MCF 10A (cell line): ENCODE measurements at regions of chr13 and their contacts with region 1.

Region 1: GRCh38 chr13:20902438-20903163 is at the start of gene XPO4:
- DNase-seq: peak; percentile 77
- H3K4me3 Mint-ChIP-seq: peak within 1 kb of the TSS; percentile 94
- H3K27ac Mint-ChIP-seq: peak within 1 kb of the TSS; percentile 94
- H3K4me1 Mint-ChIP-seq: peaks cover 5% of the 10 kb centered on the region
- H3K27me3 Mint-ChIP-seq: no peaks in the 10 kb centered on the region
- CTCF ChIP-seq: no peak
- total RNA-seq, gene XPO4: 22.5 and 25.8 TPM in 2 replicates

Region 2: GRCh38 chr13:20684546-20684945 is 218.1 kb before region 1 on chr13:
- CTCF ChIA-PET with region 1: no interaction called
- POLR2A ChIA-PET with region 1: no interaction called
- intact Hi-C with region 1: no loop called
- DNase-seq: peak; percentile 60
- H3K4me3 Mint-ChIP-seq: no peak overlapping the region
- H3K27ac Mint-ChIP-seq: no peak overlapping the region
- H3K4me1 Mint-ChIP-seq: no peaks in the 10 kb centered on the region
- H3K27me3 Mint-ChIP-seq: no peaks in the 10 kb centered on the region
- CTCF ChIP-seq: no peak

Region 3: DNA sequence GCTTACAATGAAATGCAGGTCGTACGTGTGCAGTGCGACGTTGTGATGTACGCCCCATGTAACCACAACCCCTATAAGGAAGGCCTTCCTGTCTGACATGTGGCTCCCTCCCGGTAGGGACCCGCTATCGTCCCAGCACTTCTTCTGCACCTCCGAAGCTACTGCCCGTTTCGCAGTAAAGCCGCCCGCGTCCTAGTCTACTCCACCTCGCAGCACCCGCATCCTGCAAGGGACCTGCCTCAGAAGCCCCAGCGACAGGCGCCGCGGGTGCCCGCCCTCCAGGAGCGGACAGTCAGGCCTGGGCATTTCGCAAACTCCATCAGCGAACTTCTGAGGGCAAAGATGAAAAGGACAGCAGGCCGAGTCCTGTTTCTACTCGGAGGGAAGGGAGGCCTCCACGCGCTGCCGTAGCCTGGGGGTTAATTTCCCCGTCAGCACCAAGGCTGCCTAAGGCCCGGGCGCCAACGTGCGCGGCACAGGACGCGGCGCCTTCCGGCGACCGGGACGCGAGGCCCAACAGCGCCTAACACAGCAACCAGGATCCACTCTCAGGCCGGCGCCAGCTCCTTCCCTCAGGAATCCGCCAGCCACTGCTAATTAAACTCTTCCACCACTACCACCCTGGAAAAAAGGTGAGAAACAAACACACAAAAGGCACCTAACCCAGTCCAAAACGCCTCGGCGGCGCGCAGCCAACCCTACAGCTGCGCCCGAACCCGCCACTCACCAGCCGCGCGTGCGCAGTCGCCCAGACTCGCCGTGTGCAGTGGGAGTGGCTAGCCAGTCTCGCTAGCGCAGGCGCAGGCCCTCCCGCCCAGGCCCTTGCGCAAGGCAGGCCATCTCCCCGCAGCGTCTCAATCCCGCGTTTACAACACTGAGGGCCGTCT is 129.2 kb before region 1 on chr13 and contains the start of gene EEF1AKMT1:
- CTCF ChIA-PET with region 1: no interaction called
- POLR2A ChIA-PET with region 1: interaction called, 12 read pairs
- intact Hi-C with region 1: no loop called
- DNase-seq: peak; percentile 93
- H3K4me3 Mint-ChIP-seq: peak within 1 kb of the TSS; percentile 83
- H3K27ac Mint-ChIP-seq: peak within 1 kb of the TSS; percentile 93
- H3K4me1 Mint-ChIP-seq: peaks cover 6% of the 10 kb centered on the region
- H3K27me3 Mint-ChIP-seq: no peaks in the 10 kb centered on the region
- CTCF ChIP-seq: no peak
- total RNA-seq, gene EEF1AKMT1: 11.3 and 16.5 TPM in 2 replicates

Region 4: DNA sequence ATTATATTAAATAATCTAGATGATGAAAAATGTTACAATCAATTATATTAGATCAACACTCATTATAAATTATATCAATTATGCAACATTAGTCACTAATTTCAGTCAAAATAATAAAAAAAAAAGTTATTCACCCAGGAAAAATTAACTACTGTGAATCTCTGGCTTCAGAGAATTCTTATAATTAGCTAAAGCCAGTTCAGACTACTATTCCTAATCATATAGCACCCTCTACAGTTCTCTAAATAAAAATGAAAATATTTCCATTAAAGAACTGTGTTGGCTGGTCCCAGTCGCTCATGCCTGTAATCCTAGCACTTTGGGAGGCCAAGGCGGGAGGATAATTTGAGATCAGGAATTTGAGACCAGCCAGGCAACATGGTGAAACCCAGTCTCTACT is 33.1 kb before region 1 on chr13:
- CTCF ChIA-PET with region 1: interaction called, 6 read pairs
- POLR2A ChIA-PET with region 1: interaction called, 16 read pairs
- intact Hi-C with region 1: no loop called
- DNase-seq: no peak
- H3K4me3 Mint-ChIP-seq: no peak overlapping the region
- H3K27ac Mint-ChIP-seq: no peak overlapping the region
- H3K4me1 Mint-ChIP-seq: peaks cover 15% of the 10 kb centered on the region
- H3K27me3 Mint-ChIP-seq: no peaks in the 10 kb centered on the region
- CTCF ChIP-seq: peak; percentile 26

Region 5: GRCh38 chr13:20891768-20892167 is 10.8 kb before region 1 on chr13:
- CTCF ChIA-PET with region 1: interaction called, 4 read pairs
- POLR2A ChIA-PET with region 1: interaction called, 13 read pairs
- intact Hi-C with region 1: no loop called
- DNase-seq: no peak
- H3K4me3 Mint-ChIP-seq: no peak overlapping the region
- H3K27ac Mint-ChIP-seq: no peak overlapping the region
- H3K4me1 Mint-ChIP-seq: no peaks in the 10 kb centered on the region
- H3K27me3 Mint-ChIP-seq: no peaks in the 10 kb centered on the region
- CTCF ChIP-seq: no peak